BJ (cell line): ENCODE measurements at regions of chr3 and their contacts with region 1.

Region 1: GRCh38 chr3:24622138-24622537 is 127.5 kb upstream of the THRB start:
- DNase-seq: no peak
- H3K4me3 ChIP-seq: no peak overlapping the region
- H3K27me3 ChIP-seq: no peaks in the 10 kb centered on the region
- CTCF ChIP-seq: no peak

Region 2: GRCh38 chr3:24341668-24342067 is 280.5 kb before region 1 on chr3:
- CTCF ChIA-PET with region 1: no interaction called
- POLR2A ChIA-PET with region 1: interaction called, 11 read pairs
- DNase-seq: no peak
- H3K4me3 ChIP-seq: no peak overlapping the region
- H3K27me3 ChIP-seq: no peaks in the 10 kb centered on the region
- CTCF ChIP-seq: no peak